Activated B cell treated with CpG ODN at 0.5 μM for 24 hours (primary cell): ENCODE measurements at regions of chr12 and their contacts with region 1.

Region 1: GRCh38 chr12:49855005-49855404 is 12.1 kb upstream of the BCDIN3D start:
- DNase-seq: no peak
- ATAC-seq: no peak
- H3K4me3 Mint-ChIP-seq: no peak overlapping the region
- H3K27ac Mint-ChIP-seq: no peak overlapping the region
- H3K4me1 Mint-ChIP-seq: no peaks in the 10 kb centered on the region
- H3K27me3 Mint-ChIP-seq: peaks cover 24% of the 10 kb centered on the region
- CTCF ChIP-seq: no peak

Region 2: DNA sequence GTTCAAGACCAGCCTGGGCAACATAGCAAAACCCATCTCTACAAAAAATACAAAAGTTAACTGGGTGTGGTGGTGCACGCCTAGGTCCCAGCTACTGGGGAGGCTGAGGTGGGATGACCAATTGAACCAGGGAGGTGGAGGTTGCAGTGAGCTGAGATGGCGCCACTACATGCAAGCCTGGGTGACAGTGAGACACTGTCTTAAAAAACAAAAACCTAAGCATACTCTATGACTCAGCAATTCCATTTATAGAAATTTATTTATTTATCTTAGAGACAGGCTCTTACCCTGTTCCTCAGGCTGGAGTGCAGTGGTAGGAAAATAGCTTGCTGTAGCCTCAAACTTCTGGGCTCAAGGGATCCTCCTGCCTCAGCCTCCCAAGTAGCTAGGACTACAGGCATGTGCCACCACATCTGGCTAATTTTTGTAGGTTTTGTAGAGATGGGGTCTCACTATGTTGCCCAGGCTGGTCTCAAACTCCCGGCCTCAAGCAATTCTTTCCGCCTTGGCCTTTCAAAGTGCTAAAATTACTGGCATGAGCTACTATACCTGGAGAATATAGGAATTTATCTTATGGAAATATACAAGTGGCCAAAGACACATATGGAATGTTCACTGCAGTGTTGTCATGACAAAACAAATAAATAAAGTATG is 70.1 kb before region 1 on chr12:
- CTCF ChIA-PET with region 1: no interaction called
- POLR2A ChIA-PET with region 1: no interaction called
- intact Hi-C with region 1: no loop called
- DNase-seq: no peak
- ATAC-seq: no peak
- H3K4me3 Mint-ChIP-seq: no peak overlapping the region
- H3K27ac Mint-ChIP-seq: no peak overlapping the region
- H3K4me1 Mint-ChIP-seq: no peaks in the 10 kb centered on the region
- H3K27me3 Mint-ChIP-seq: peaks cover 25% of the 10 kb centered on the region
- CTCF ChIP-seq: no peak

Region 3: DNA sequence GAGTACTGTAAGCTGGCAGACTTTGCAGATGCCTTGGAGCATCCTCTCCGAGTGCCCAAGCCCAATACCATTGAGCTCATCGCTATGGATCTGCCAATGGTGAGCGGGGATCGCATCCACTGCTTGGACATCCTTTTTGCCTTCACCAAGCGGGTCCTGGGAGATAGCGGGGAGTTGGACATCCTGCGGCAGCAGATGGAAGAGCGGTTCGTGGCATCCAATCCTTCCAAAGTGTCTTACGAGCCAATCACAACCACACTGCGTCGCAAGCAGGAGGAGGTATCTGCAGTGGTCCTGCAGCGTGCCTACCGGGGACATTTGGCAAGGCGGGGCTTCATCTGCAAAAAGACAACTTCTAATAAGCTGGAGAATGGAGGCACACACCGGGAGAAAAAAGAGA is 1951.9 kb after region 1 on chr12:
- CTCF ChIA-PET with region 1: no interaction called
- POLR2A ChIA-PET with region 1: interaction called, 11 read pairs
- intact Hi-C with region 1: no loop called
- DNase-seq: no peak
- ATAC-seq: no peak
- H3K4me3 Mint-ChIP-seq: no peak overlapping the region
- H3K27ac Mint-ChIP-seq: no peak overlapping the region
- H3K4me1 Mint-ChIP-seq: peaks cover 5% of the 10 kb centered on the region
- H3K27me3 Mint-ChIP-seq: peaks cover 31% of the 10 kb centered on the region
- CTCF ChIP-seq: no peak